Esophagus muscularis mucosa (tissue), 4 donors: ENCODE measurements at regions of chr9 and their contacts with region 1.

Region 1: GRCh38 chr9:33099725-33100350 is 23.4 kb upstream of the SMU1 start:
- DNase-seq: no peak
- H3K4me3 ChIP-seq: no peak overlapping the region
- H3K27ac ChIP-seq: no peak overlapping the region
- H3K4me1 ChIP-seq: peaks cover 0 to 7% (median 0%) of the 10 kb centered on the region in 4 donors
- H3K27me3 ChIP-seq: no peaks in the 10 kb centered on the region
- CTCF ChIP-seq: no peak
- EP300 ChIP-seq: no peak
- POLR2A ChIP-seq: no peak

Region 2: DNA sequence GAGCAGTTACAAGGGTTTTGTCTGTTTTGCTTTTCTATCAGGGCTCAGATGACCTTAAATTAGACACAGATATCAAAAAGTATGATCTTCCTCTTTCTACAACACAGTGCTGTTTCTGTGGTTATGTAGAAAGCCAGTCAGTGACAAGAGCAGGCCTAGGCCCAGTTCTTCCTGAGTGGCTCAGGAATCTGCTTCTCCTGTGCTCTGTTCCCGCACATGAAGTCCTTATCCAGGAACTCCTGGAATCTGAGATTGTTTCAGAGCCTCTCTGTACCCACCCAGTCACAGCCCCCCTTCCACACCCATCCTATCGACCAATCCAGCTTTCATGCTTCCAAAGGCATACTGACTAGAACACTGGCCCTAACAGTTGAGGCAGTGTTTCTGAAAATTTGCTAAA is 17.0 kb after region 1 on chr9:
- intact Hi-C with region 1: no loop called
- DNase-seq: no peak
- H3K4me3 ChIP-seq: no peak overlapping the region
- H3K27ac ChIP-seq: peak overlapping the region in 2 of 4 donors; percentile 0 to 10
- H3K4me1 ChIP-seq: peaks cover 3 to 31% (median 11%) of the 10 kb centered on the region in 4 donors
- H3K27me3 ChIP-seq: no peaks in the 10 kb centered on the region
- CTCF ChIP-seq: no peak
- EP300 ChIP-seq: no peak
- POLR2A ChIP-seq: no peak

Region 3: DNA sequence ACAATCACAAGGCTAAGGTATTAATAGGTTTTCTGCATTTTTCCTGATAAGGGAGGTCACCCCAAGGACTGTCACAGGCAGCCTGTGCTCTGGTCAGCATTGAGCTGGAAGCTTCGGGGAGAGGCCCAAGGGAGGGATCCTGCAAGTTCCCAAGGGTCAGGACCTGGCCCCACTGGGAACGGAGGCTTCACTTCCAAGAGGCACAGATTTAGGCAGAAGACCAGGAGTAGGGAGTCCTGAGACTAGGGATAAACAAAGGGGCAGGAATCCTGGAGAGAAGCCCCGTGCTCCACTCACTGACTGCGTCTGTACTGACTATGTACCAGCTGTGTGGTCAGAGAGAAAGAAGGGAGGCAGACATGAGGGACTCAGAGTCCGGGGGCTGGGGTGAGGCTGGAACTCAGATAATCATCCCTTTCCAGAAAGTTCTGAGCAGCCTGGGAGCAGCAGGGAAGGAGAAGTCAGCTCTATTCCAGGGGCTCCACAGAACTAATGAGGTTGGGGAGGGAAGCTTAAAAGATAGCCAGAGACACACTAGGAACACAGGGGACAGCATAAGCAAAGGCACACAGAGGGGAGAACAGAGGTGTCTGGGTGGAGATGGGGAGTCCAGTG is 29.5 kb after region 1 on chr9:
- intact Hi-C with region 1: no loop called
- DNase-seq: no peak
- H3K4me3 ChIP-seq: no peak overlapping the region
- H3K27ac ChIP-seq: no peak overlapping the region
- H3K4me1 ChIP-seq: peaks cover 48 to 83% (median 60%) of the 10 kb centered on the region in 4 donors
- H3K27me3 ChIP-seq: no peaks in the 10 kb centered on the region
- CTCF ChIP-seq: no peak
- EP300 ChIP-seq: no peak
- POLR2A ChIP-seq: no peak

Region 4: DNA sequence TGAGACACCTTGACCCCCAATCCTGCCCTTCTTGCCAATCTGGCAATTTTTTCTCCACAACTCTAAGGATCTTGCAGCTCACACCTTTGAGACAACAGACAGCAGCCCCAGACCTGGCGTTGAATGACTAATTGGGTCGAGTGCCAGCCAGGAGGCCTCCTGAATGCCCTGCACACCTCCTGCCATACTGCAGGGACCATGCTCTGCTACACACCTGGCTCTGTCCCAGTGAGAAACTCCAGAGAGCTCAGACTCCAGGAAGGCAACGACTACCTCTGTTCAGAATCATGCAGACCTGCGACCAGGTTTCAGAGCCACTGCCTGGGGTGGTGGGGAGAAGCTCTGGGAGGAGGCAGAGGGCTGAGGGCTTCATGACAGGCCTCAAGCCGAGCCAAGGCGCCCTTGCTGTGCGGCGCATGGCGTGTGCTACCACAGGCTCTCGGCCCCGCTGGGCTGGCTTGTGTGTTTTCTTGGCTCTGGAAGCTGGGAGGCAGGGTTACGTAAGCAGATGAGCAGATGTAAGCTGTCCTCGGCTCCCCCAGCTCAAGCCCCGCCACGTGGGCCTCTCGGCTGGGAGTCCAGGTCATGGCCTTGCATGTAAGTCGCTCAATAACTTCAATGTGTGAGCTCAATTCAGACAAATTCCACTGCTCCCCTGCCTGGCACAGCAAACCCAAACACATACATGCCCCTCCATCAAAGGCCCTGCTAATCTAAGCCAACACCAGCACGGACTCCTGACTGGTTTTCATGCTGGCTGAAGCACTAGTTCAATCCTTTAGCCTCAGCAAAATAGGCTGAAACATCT is 39.8 kb after region 1 on chr9:
- intact Hi-C with region 1: loop called (anchors 5 kb)
- DNase-seq: no peak
- H3K4me3 ChIP-seq: peak overlapping the region in 3 of 4 donors; percentile 0 to 28 (median 16)
- H3K27ac ChIP-seq: peak overlapping the region; percentile 67 to 77 (median 76)
- H3K4me1 ChIP-seq: peaks cover 92 to 97% (median 96%) of the 10 kb centered on the region in 4 donors
- H3K27me3 ChIP-seq: no peaks in the 10 kb centered on the region
- CTCF ChIP-seq: no peak
- EP300 ChIP-seq: no peak
- POLR2A ChIP-seq: no peak